ENCODE measurements at regions of chr6 and their contacts with region 1.

Region 1: DNA sequence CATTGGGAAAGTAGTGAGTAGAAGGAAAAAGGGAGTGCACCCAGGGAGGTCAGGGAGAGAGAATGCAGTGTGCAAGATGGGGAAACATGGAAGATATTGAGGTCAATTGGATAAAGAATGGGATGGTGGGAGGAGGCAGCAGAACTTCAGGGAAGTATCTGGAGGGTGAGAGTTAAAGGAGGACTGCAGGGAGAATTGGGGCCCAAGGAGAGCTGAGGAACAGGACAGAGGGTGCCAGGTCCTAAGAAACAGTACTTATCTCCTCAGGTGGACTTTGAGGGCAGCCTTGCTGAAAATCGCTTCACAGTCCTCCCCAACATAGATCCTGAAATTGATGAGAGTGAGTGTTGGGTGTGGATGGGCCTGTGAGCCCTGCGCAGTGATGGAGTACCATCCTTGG is 4.2 kb upstream of the SAPCD1 start:
- DNase-seq: no peak
- H3K4me3 Mint-ChIP-seq: no peak overlapping the region
- H3K27ac Mint-ChIP-seq: no peak overlapping the region
- H3K4me1 Mint-ChIP-seq: no peaks in the 10 kb centered on the region
- H3K27me3 Mint-ChIP-seq: no peaks in the 10 kb centered on the region
- CTCF ChIP-seq: no peak

Region 2: DNA sequence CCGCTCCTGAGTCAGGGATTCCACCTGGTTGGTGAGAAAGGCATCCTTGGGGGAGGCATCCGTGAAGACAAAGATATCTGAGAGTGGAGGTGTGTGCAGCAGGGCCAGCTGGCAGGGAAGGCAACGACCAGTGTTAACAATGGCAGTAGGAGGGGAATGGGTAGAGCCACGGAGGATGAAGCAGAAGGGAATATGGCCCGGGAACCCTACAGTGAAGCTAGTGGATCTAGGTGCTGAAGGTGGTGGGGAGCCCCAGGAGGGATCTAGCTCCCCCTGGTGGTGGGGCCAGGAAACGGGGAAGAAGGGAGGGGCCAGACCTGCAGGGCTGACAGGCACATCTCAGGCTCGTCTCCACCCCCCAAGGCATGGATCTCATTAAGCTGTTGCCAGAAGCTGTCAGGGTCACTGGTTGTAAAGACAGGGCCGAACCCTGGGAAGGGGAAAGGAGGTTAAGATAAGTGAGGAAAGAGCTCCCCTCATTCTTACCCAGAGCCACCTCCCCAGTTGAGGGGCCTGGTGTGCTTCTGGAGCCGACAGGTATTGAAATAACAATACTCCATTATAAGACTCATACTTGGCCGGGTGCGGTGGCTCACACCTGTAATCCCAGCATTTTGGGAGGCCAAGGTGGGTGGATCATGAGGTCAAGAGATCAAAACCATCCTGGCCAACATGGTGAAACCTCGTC is 11.5 kb after region 1 on chr6:
- CTCF ChIA-PET with region 1: interaction called, 15 read pairs
- POLR2A ChIA-PET with region 1: interaction called, 4 read pairs
- intact Hi-C with region 1: no loop called
- DNase-seq: peak; percentile 74
- H3K4me3 Mint-ChIP-seq: no peak overlapping the region
- H3K27ac Mint-ChIP-seq: no peak overlapping the region
- H3K4me1 Mint-ChIP-seq: peaks cover 5% of the 10 kb centered on the region
- H3K27me3 Mint-ChIP-seq: no peaks in the 10 kb centered on the region
- CTCF ChIP-seq: peak; percentile 65

Region 3: DNA sequence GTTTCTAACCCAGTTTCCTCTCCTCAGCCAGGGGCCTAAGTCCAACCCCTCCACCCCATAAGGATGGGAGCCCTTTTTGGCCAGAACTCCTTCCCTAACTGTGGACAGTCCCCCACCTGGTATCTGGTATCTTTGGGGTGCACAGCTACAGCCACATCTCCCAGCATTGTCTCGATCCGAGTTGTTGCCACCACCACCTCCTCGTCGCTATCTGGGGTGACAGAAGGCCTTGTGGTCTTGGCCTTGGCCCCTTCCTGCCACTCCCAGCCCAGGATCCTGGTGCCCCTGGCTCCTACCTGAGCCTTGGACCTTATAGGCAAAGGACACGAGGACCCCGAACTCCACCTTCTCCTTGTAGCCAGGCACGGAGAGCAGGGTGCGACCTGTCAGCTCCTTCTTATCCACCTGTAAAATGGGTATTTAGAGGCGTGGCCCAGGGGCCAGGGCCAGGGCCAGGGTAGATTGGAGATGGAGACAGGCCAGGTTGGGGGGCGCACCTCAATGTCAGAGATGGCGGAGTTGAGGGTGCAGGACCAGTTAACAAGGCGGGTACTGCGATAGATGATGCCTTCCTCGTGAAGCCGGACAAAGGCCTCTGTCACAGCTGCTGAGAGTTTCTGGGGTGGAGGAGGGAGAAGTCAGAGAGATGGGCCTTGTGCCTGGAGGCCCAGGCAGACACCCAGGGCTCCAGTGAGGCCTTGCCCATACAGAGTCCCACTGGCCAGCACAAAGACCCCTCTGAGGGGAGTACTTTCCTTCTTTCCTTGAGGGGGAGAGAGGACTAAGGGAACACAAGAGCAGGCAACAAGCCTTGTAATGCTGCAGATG is 26.0 kb after region 1 on chr6:
- CTCF ChIA-PET with region 1: no interaction called
- POLR2A ChIA-PET with region 1: no interaction called
- intact Hi-C with region 1: no loop called
- DNase-seq: no peak
- H3K4me3 Mint-ChIP-seq: no peak overlapping the region
- H3K27ac Mint-ChIP-seq: no peak overlapping the region
- H3K4me1 Mint-ChIP-seq: no peaks in the 10 kb centered on the region
- H3K27me3 Mint-ChIP-seq: no peaks in the 10 kb centered on the region
- CTCF ChIP-seq: no peak

Measured in MCF 10A (cell line).